AG04450 (cell line): ENCODE measurements at regions of chr6 and their contacts with region 1.

Region 1: GRCh38 chr6:147617366-147617765 is 108.9 kb downstream of the SAMD5 start:
- DNase-seq: no peak
- H3K4me3 ChIP-seq: no peak overlapping the region
- H3K27ac ChIP-seq: no peak overlapping the region
- H3K27me3 ChIP-seq: no peaks in the 10 kb centered on the region
- CTCF ChIP-seq: no peak

Region 2: DNA sequence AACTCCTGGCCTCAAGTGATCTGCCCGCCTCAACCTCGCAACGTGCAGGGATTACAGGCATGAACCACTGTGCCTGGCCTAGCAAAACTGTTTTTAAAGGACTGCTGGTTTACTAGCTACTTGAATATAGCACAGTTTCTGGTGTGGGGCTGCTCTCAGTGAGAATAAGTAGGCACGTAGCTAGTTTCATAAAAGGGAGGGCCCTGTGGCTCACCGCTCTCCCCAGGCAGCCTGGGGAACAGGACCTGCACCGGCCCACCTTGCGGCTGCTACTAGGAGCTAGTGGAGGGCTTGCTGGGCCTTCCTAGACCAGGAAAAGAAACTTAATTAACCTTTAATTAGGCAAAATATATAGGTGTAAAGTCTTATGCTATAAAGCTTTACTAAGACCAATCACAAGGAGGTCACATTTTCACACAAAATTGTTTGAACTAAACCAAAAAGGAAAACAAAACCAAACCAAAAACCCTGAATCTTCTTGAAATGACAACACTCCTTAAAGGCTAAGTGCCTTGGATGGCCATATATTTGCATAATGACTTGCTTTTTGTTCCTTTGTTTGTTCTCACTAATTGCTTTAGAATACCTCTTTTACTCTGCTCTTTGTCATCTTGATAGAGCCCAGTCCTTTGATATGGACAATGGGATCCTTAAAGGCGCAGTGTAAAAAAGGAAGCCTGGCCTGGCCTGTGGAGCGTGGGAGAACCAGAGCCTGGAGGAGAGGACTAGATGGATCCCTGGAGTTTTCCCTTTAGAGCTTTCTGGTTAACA is 178.4 kb before region 1 on chr6:
- CTCF ChIA-PET with region 1: no interaction called
- POLR2A ChIA-PET with region 1: no interaction called
- DNase-seq: no peak
- H3K4me3 ChIP-seq: no peak overlapping the region
- H3K27ac ChIP-seq: no peak overlapping the region
- H3K27me3 ChIP-seq: peaks cover under 1% of the 10 kb centered on the region
- CTCF ChIP-seq: no peak

Region 3: GRCh38 chr6:147595961-147596360 is 21.4 kb before region 1 on chr6:
- CTCF ChIA-PET with region 1: no interaction called
- POLR2A ChIA-PET with region 1: interaction called, 14 read pairs
- DNase-seq: no peak
- H3K4me3 ChIP-seq: no peak overlapping the region
- H3K27ac ChIP-seq: no peak overlapping the region
- H3K27me3 ChIP-seq: no peaks in the 10 kb centered on the region
- CTCF ChIP-seq: no peak